K562 (cell line): ENCODE measurements at regions of chr1 and their contacts with region 1.

Region 1: GRCh38 chr1:94821636-94822305 is 1.6 kb downstream of the SLC44A3 start:
- DNase-seq: no peak
- ATAC-seq: no peak
- H3K4me3 ChIP-seq: no peak overlapping the region
- H3K27ac ChIP-seq: no peak overlapping the region
- H3K4me1 ChIP-seq: peaks cover 0 to 8% of the 10 kb centered on the region in 2 experiments; a peak in 2 of 5 replicates
- H3K27me3 ChIP-seq: peaks cover 18 to 27% of the 10 kb centered on the region in 2 experiments; a peak in 4 of 5 replicates
- CTCF ChIP-seq: no peak
- EP300 ChIP-seq: no peak
- POLR2A ChIP-seq: no peak
- RAD21 ChIP-seq: no peak

Region 2: DNA sequence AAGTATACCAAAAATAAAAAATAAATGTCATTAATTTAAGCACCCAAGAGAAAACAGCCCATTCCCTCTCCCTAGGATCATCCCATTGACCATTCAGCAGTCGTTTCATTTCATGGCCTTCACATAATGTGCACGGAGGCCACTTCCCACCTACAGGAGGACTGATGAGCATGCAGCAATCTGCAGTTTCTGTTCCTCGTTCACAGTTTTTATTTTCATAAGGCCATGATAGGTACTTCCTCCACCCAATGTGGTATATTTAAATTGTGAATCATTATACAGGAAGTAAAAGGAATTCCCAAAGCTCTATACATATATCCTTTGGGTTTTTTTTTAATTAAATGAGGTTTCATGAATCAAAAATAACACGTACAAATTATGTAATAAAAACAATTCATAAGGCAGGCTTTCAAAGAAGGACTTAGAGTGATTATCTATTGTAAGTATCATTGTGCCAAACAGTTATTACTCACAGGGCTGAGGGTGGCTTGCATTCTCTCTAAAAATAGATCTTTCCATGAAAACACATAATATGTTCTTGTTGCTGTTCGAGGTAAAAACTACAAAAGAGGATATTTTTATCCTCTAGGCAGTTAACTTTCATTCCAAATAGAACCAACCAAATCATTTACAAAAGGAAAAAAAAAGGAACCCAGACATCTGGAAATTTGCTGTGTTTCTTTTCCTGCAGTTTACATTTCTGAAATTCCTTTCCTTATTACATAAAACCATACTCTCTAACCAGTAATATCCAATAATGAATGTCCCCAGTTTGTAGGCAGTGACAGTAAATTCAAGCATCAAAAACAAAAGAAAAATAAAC is 29.1 kb before region 1 on chr1:
- CTCF ChIA-PET with region 1: interaction called, 11 read pairs
- POLR2A ChIA-PET with region 1: no interaction called
- in situ Hi-C with region 1: no loop called
- intact Hi-C with region 1: no loop called
- DNase-seq: no peak
- ATAC-seq: no peak
- H3K4me3 ChIP-seq: no peak overlapping the region
- H3K27ac ChIP-seq: no peak overlapping the region
- H3K4me1 ChIP-seq: no peaks in the 10 kb centered on the region
- H3K27me3 ChIP-seq: no peaks in the 10 kb centered on the region; a peak in 1 of 5 replicates
- CTCF ChIP-seq: no peak
- EP300 ChIP-seq: no peak
- POLR2A ChIP-seq: no peak
- RAD21 ChIP-seq: no peak